Activated T-helper 1 cell treated with anti-CD3 and anti-CD28 coated beads, Interleukin-12 subunit alpha, Interleukin-12 subunit beta, Interleukin-2, Interleukin-4 antibody, amounts not matched to agents 30 ng/mL and 10 ng/mL and 1 ng/mL, durations not matched to agents 14 hours and 24 hours and 36 hours (primary cell): ENCODE measurements at regions of chr12 and their contacts with region 1.

Region 1: DNA sequence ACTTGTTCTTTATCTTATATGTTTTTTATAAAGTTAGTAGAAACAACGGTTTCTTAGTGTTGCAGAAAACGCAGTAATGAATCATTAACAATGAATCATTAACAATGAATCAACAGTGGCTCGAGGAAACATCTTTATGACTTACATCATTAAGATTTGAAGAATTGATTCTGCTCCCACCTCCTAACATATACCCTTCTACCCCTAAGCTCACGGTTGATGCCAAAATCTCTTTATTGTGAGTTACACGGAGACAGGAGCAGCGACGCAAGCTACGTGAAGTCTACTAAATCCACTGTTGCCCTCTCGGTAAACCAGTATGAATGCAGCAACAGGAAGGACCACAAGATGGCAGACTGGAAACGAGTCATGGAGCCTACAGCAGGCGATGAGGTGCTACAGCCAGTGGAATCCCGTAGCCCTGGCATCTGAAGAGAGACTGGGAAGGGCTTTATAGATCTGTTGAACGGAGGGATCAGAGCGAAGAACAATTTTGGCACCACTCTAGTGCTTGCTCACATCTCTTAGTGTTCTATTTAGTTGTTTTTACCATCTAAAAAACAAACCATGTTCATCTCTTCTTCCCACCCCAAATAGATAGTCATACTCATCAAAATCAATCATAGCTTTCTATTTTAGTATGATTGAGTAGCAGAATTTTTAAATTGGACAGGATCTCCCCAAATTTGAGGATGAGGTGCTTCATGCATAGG is 332.7 kb downstream of the DUSP6 start:
- DNase-seq: peak; percentile 73
- H3K4me3 Mint-ChIP-seq: no peak overlapping the region
- H3K27ac Mint-ChIP-seq: no peak overlapping the region
- H3K4me1 Mint-ChIP-seq: peaks cover 31% of the 10 kb centered on the region
- H3K27me3 Mint-ChIP-seq: peaks cover 12% of the 10 kb centered on the region

Region 2: DNA sequence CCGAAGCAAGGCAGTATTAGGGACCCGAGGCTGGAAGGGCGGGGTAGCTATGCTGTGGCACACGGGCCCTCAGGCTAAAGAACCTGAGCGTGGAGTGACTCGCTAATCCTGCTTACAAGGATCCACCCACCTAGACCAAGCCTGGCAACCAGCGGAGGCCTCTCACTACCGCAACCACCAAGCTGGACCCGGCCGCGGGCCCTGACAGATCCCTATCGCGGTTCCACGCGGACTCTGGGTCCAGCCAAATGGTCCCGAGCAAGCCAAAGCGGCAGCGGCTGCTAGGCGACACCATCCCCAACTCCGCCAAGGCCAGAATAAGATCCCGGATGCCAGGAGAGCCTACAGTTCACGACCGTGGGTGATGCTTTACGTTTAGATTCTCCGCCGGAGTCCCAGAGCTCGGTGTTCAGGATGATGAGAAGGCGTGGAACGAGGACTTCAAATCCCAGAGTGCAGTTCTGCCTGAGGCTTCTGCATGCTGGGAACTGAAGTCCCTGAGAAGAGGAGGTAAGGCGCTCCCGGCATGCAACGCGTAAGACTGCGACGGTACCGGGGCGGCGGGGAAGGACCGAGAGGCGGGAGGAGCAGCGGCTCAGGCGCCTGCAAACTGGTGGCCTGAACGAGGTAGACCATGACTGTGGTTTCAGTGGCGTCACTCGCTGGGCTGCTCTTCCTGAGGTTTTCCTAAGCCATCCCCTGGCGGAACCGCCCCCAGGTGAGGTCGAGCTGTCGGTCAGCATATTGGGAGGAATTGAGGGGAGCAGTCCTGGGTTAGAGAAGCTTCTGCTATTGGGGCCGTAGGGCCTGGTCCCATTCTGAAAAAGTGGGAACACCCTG is 877.6 kb before region 1 on chr12 and contains the starts of genes CEP290 and TMTC3:
- intact Hi-C with region 1: loop called (anchors 5 kb)
- DNase-seq: peak; percentile 92
- H3K4me3 Mint-ChIP-seq: peak within 1 kb of the TSS; percentile 91
- H3K27ac Mint-ChIP-seq: peak within 1 kb of the TSS; percentile 95
- H3K4me1 Mint-ChIP-seq: peaks cover 34% of the 10 kb centered on the region
- H3K27me3 Mint-ChIP-seq: no peaks in the 10 kb centered on the region
- total RNA-seq, gene CEP290: 15.5 and 17.0 TPM in 2 replicates
- total RNA-seq, gene TMTC3: 6.9 and 7.1 TPM in 2 replicates

Region 3: DNA sequence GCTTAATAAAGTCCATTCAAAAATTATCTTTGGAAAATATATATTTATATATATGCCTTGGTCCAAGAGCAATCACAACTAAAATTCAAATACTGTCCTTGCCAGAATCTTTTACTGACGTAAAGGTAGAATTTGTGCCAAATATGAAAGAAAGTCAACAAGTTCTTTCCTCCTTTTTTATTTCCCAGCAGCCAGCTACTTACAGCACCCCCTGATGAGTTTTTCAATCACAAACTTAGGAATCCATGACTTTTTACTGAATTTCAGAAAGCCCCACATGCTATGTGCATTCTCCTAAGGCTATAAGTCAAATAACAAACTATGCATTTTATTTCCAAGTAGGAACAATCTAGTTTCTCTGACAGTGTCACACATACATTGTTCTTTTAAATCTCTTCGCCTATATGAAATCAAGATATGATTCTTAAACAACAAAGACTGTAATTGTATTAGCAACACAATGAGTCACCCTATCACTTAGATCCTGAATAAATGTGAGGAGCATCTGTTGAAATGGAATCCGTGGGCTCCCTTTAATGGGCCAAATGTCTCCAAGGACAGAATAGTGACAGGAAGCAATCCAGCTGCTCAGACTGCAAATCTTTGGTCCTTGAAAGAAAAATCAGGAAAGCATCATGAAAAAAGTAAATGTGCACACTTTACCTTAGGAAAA is 61.4 kb after region 1 on chr12:
- intact Hi-C with region 1: no loop called
- DNase-seq: no peak
- H3K4me3 Mint-ChIP-seq: no peak overlapping the region
- H3K27ac Mint-ChIP-seq: no peak overlapping the region
- H3K4me1 Mint-ChIP-seq: peaks cover 10% of the 10 kb centered on the region
- H3K27me3 Mint-ChIP-seq: peaks cover 2% of the 10 kb centered on the region

Region 4: DNA sequence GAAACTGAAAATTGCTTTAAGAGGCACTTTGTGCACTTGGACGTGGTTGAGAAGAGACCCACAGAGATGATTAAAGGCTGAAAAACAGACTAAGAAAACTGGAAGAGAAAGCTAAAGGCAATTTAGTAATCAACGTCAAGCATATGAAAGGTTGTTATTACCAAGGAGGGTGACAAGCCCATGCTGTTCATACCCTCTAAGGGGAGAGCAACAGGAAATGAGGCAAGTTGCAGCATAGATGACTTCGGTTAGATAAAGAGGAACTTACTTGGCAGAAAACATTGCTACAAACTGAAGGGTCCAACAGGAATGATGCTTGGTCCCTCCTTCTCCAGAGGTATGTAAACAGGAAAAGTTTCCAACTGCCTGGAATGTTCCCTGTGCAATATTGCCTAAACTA is 225.0 kb after region 1 on chr12:
- intact Hi-C with region 1: loop called (anchors 1 kb)
- DNase-seq: peak; percentile 45
- H3K4me3 Mint-ChIP-seq: peak overlapping the region; percentile 32
- H3K27ac Mint-ChIP-seq: peak overlapping the region; percentile 84
- H3K4me1 Mint-ChIP-seq: peaks cover 53% of the 10 kb centered on the region
- H3K27me3 Mint-ChIP-seq: no peaks in the 10 kb centered on the region

Region 5: GRCh38 chr12:89373763-89374572 is 354.4 kb after region 1 on chr12:
- intact Hi-C with region 1: loop called (anchors 1 kb)
- DNase-seq: no peak
- H3K4me3 Mint-ChIP-seq: no peak overlapping the region
- H3K27ac Mint-ChIP-seq: no peak overlapping the region
- H3K4me1 Mint-ChIP-seq: peaks cover 50% of the 10 kb centered on the region
- H3K27me3 Mint-ChIP-seq: no peaks in the 10 kb centered on the region

Region 6: DNA sequence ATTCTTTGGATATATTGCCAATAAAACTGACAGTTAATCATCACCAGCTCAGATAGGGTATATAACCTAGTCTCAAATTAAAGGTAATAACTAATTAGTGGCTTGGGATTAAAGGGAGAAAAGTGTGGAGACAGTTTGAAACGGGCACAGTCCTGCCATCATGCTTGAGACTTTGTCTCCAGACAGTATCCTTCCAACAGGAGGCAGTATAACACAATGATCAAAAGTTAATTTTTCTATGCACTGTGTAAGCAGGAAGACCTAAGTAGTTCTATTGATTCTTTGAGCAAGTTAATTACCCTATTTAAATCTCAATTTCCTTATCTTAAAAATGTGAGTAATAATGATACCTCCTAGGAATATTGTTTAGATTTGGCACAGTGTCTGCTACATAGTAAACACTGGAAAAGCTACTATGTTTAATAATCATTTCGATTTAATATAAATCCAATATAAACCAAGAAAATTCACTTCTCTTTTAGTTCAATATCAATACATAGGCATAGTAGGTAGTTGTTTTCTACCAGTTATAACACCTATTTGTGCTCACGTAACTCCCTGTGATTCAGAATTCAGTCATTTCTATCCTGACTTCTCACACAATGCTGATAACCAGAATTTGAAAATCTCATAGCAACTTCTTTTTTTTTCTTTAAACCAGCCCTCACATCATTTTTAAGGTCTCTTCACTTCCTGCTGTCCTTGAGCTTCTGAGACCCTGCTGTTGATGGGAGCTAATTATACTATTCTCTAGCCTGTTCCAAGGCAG is 451.4 kb after region 1 on chr12:
- intact Hi-C with region 1: loop called (anchors 1 kb)
- DNase-seq: no peak
- H3K4me3 Mint-ChIP-seq: no peak overlapping the region
- H3K27ac Mint-ChIP-seq: peak overlapping the region; percentile 22
- H3K4me1 Mint-ChIP-seq: peaks cover 76% of the 10 kb centered on the region
- H3K27me3 Mint-ChIP-seq: no peaks in the 10 kb centered on the region

Region 7: GRCh38 chr12:89529738-89530137 is 510.2 kb after region 1 on chr12:
- intact Hi-C with region 1: loop called (anchors 1 kb)
- DNase-seq: no peak
- H3K4me3 Mint-ChIP-seq: no peak overlapping the region
- H3K27ac Mint-ChIP-seq: no peak overlapping the region
- H3K4me1 Mint-ChIP-seq: peaks cover 25% of the 10 kb centered on the region
- H3K27me3 Mint-ChIP-seq: no peaks in the 10 kb centered on the region

Region 8: DNA sequence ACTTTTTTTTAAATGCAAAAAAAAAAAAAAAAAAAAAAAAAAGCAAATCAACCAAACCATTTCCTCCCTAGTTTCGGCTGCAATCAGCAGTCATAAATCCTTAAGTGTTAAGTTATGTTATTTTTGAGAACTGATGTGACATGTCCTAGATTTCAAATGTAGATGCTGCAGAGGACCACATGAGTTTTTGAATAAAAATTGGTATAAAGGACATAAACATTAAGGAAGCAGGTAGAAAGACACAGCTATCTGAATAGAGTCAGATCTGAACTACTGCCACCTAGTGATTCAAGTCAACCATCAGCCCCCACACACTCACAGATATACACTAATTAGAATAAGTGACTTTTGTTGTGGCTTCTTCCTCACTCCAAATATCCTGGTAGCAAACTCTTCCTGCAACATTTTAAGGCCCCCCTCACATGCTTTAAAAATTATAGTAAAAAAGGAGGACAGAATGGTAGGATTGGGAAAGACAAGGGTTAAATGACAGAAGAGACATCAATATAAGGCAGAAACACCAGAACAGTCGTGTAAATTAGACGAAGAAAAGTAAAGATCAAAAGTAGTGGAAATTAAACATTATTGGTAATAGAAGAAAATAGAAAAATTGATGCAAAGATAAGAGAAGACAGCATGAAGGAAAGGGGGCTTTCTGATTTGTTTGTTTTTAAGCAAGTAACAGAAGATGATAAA is 1083.5 kb after region 1 on chr12:
- intact Hi-C with region 1: loop called (anchors 5 kb)
- DNase-seq: no peak
- H3K4me3 Mint-ChIP-seq: no peak overlapping the region
- H3K27ac Mint-ChIP-seq: no peak overlapping the region
- H3K4me1 Mint-ChIP-seq: peaks cover 6% of the 10 kb centered on the region
- H3K27me3 Mint-ChIP-seq: peaks cover 2% of the 10 kb centered on the region